ENCODE measurements at regions of chr21 and their contacts with region 1.

Region 1: DNA sequence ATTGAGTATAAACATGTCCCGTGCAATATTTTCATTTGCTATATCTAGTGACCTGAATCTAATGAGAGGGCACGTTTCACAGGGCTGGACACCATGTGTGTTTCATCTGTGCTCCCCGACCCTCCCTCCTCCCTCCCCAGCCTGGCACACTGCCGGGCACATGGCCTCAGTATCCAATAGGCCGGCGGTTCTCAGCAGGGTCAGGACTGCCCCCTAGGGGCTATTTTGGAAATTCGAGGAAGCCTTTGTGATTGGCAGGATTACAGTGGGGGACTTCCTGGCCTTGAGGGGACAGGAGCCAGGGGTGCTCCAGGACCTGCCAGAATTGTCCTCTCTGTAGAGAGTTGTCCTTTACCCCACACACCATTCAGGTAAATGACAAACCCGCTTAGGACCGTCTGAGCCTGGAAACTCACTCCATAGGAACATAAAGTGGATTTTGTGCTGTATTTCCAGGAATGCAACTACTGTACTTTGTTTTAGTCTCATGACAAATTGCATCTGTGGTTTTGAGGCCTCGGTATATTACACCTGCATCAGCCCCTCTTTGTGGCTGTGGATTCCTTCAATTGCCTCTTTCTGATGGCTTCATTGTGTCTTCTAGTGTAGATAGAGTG is 109.5 kb upstream of the SIM2 start:
- DNase-seq: peak; percentile 72
- H3K4me3 ChIP-seq: no peak overlapping the region
- H3K27ac ChIP-seq: no peak overlapping the region
- H3K4me1 ChIP-seq: no peaks in the 10 kb centered on the region
- CTCF ChIP-seq: peak; percentile 92

Region 2: DNA sequence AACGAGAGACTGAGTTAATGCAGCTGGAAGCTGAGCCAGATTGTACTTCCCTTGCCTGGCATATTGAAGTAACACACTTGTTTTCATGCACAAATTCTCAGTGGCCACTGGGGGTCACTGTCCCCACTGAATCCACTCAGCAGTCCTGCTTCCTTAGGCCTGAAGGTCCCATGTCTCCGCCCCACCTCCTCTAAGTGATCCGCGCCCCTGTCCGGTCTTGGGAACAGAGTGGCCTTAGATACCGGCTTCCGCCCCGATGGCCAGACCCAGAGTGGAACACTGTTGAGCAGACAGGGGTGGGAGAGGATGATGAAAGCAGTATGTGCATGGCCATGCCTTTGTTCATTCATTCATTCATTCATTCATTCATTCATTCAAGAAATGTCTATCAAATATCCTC is 169.5 kb before region 1 on chr21:
- CTCF ChIA-PET with region 1: no interaction called
- POLR2A ChIA-PET with region 1: no interaction called
- intact Hi-C with region 1: loop called (anchors 5 kb)
- DNase-seq: peak; percentile 63
- H3K4me3 ChIP-seq: no peak overlapping the region
- H3K27ac ChIP-seq: no peak overlapping the region
- H3K4me1 ChIP-seq: no peaks in the 10 kb centered on the region
- CTCF ChIP-seq: peak; percentile 85

Region 3: DNA sequence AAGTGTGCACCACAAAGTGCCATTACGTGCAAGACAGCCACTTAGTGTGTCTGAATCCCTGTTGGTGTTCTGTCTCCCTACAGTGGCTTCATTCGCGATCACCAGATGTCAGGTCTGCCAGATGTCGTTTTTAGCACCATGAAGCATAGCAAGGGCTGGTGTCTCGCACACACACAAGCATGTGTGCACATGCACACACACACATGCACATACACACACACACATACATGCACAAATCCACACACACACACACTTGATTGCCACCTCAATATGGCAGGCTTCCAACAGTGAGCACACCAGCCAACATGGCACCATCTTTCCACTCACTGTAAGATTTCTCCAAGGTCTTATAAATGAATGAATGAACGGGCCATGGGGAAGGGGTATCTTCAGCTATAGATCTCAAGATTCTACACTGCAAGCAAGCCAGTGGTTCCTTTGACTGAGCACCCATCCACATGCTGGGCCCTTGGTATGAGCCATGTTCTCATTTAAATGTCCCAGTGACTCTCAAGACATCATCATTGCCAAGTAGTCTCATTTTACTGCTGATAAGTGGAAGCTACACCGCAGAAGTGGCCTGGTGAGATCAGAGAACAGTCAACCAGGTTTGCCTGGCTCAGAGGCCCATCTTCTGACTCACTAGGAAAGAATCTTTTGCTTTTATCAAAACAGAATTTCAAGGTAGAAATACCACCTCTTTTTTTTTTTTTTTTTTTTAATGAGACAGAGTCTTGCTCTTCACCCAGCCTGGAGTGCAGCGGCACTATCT is 194.3 kb after region 1 on chr21:
- CTCF ChIA-PET with region 1: no interaction called
- POLR2A ChIA-PET with region 1: no interaction called
- intact Hi-C with region 1: no loop called
- DNase-seq: no peak
- H3K4me3 ChIP-seq: no peak overlapping the region
- H3K27ac ChIP-seq: no peak overlapping the region
- H3K4me1 ChIP-seq: no peaks in the 10 kb centered on the region
- CTCF ChIP-seq: no peak